ENCODE measurements at regions of chr17 and their contacts with region 1.

Region 1: DNA sequence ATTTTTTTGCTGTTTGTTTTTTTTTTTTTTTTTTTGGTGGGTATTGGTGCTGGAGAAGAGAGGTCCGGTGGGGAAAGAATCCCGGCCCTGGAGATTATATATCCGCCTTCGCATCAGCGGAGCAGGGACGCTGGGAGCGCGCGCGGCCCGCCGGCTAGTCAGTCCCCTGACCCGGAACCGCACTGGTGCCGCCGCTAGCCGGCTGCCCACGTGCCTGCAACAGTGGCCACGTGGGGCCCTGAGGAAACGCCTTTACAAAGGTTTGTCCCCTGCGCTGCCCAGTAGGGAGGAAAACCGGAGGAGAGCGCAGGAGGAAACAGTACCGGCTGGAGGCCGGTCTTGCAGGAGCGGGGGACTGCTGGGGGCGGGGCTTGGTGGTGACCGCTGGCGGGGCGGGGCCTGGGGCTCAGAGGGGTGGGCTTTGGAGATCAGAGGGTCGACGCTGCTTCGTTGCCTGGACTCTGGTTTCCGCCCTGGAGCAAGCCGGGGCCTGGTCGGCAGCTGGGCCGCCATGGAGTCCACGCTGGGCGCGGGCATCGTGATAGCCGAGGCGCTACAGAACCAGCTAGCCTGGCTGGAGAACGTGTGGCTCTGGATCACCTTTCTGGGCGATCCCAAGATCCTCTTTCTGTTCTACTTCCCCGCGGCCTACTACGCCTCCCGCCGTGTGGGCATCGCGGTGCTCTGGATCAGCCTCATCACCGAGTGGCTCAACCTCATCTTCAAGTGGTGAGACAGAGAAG is at the start of gene G6PC3:
- DNase-seq: peak; percentile 98
- H3K4me3 ChIP-seq: peak within 1 kb of the TSS; percentile 67 to 73 (median 72)
- H3K27ac ChIP-seq: peak within 1 kb of the TSS; percentile 90 to 96 (median 94)
- H3K4me1 ChIP-seq: peaks cover 0 to 47% (median 41%) of the 10 kb centered on the region in 4 donors
- H3K27me3 ChIP-seq: no peaks in the 10 kb centered on the region
- CTCF ChIP-seq: no peak
- EP300 ChIP-seq: peak in 1 of 4 donors; percentile 87
- POLR2A ChIP-seq: peak; percentile 61 to 75
- total RNA-seq, gene G6PC3: 22.2 to 29.8 (median 25.9) TPM

Region 2: DNA sequence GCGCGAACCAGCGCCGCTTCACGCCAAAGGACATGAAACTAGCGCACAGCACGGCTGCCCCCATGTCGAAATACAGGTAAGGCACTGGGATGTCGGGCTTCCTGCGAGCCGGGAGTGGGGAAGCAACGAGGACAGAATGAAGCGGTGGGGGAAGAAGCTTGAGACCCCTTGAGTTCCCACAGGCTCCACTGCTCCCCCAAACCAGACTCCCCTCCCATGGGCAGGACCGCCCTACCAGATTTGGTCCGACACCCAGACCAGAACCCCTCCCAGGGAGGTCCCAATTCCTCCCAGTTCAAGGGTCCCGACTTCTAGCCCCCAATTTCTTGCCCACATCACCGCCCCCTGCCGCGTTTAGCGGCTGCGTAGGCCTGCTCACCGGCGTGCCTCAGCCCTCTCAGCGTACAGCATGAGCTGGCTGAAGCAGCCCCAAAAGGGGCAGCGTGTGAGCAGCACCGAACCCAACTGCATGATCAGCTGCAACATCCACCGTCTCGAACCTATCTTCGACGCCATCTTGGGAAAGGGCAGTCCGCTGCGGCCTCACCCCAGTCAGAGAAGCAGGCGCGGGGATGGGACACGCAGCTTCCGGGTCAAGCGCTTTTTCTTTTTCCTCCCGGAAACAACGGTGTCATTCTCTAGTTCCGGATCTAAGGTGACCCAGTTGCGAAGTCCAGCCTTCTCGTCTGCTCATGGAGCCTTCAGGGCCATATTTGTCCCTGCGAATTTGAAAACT is 56.0 kb before region 1 on chr17 and contains the start of gene TMEM101:
- intact Hi-C with region 1: loop called (anchors 2 kb)
- DNase-seq: peak; percentile 96
- H3K4me3 ChIP-seq: peak within 1 kb of the TSS; percentile 87 to 95 (median 90)
- H3K27ac ChIP-seq: peak within 1 kb of the TSS; percentile 77 to 81 (median 80)
- H3K4me1 ChIP-seq: peaks cover 0 to 19% (median 17%) of the 10 kb centered on the region in 4 donors
- H3K27me3 ChIP-seq: no peaks in the 10 kb centered on the region
- CTCF ChIP-seq: no peak
- EP300 ChIP-seq: no peak
- POLR2A ChIP-seq: no peak
- total RNA-seq, gene TMEM101: 21.3 to 37.8 (median 26.3) TPM

Region 3: DNA sequence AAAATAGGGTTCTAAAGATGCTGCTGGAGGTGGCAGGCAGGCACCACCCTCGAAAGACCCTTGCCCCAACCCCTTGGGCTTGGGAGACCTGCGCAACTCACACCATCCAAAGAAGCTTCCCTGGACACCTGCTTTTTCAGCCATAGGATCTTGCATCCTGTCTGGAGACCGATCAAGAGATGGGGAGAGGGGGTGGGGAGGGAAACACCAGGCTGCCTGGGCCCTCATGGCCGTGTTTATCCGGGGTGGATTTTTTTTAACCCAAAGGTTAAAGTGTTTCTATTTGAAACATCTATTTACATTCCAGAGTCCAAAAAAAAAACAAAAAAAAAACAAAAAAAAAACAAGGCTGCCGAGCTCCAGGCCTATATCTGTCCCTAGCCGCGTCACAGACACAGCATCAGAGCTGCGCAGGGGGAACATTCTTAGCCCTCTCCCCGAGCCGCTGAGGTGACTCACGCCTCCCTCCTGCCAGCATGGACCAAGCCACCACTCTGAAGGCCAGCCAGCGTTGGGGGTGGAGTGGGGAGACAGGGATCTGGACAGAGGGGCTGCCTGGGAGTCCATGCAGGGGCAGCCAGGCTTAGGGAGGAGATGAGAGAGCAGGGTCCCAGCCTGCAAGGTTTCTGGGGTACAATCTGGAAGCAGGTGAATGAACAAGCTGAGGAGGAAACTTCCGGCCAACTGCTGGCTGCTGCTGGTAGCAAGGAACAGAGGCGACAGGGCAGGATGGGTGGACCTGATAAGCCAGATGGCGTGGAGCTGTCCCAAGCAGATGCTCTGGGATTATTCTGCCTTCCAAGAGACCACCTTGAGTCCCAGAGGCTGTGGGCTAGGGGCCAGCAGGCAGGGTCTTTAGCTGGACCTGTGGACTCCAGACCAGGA is 38.1 kb after region 1 on chr17:
- intact Hi-C with region 1: loop called (anchors 2 kb)
- DNase-seq: peak; percentile 98
- H3K4me3 ChIP-seq: peak overlapping the region in 1 of 4 donors; percentile 42
- H3K27ac ChIP-seq: peak overlapping the region; percentile 91 to 95 (median 94)
- H3K4me1 ChIP-seq: peaks cover 0 to 87% (median 82%) of the 10 kb centered on the region in 4 donors
- H3K27me3 ChIP-seq: no peaks in the 10 kb centered on the region
- CTCF ChIP-seq: no peak
- EP300 ChIP-seq: peak in 2 of 4 donors; percentile 74 to 89
- POLR2A ChIP-seq: no peak

Region 4: DNA sequence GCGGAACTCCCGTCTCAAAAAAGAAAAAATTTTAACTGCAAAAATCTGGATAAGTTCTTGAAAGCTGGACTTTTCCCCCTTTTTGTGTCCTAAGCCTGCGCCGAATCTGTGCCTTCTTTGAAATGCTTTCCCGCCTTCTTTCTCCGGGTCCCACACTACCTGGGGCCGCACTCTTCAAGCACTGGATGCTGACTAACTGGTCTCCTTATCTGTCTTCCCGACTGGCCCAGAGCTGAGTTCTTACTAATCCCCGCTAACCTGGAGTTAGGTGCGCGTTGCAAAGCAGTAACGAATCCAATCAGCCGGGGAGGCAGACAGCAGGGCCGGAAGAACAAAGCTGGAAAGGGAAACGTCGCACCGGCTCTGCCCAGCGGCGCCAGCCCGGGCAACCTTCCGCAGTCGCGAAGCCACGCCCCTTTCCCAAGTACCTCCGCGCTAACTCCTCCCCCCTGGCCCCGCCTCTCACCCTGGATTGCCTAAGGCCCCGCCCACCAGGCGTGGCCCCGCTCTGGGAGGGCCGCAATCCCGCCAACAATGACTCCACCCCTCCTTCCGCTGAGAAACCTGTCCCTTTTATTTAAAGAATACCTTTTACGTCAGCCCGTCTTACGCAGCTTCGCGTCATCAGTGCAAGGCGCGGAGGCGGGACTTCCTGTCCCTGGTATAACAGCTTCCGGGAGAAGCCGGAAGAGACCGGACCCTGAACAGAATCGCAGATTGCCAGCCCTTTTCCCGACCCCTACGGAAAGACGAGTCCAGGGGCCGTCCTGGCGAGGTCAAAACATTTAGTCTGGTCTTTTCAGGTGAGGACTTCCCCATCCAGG is 115.9 kb after region 1 on chr17 and contains the start of gene TMUB2:
- intact Hi-C with region 1: no loop called
- DNase-seq: peak; percentile 99
- H3K4me3 ChIP-seq: peak within 1 kb of the TSS; percentile 60 to 94 (median 74)
- H3K27ac ChIP-seq: peak within 1 kb of the TSS; percentile 89 to 99 (median 94)
- H3K4me1 ChIP-seq: peaks cover 0 to 35% (median 27%) of the 10 kb centered on the region in 4 donors
- H3K27me3 ChIP-seq: no peaks in the 10 kb centered on the region
- CTCF ChIP-seq: no peak
- EP300 ChIP-seq: peak in 2 of 4 donors; percentile 24 to 65
- POLR2A ChIP-seq: peak; percentile 60 to 81
- total RNA-seq, gene TMUB2: 26.9 to 40.3 (median 29.2) TPM

Measured in sigmoid colon (tissue), 7 donors.